ENCODE measurements at regions of chr17 and their contacts with region 1.

Region 1: GRCh38 chr17:41548844-41549595 is 20.9 kb upstream of the KRT19 start:
- DNase-seq: peak; percentile 83
- CTCF ChIP-seq: peak; percentile 97

Region 2: DNA sequence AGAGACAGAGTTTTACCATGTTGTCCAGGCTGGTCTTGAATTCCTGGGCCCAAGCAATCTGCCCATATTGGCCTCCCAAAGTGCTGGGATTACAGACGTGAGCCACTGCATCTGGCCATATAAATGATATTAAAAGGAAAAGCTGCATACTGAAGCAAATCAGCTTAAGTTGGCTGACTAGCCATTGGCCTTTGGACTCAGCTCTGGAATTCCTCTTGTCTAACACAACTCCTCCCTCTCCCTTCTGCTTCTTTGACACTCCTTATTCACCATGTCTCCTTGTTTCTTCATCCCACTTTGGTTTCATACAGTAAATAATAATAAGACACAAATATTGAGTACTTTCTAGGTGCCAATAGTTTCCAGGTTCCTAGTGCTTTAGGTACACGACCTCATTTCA is 689.5 kb before region 1 on chr17:
- CTCF ChIA-PET with region 1: interaction called, 29 read pairs
- POLR2A ChIA-PET with region 1: no interaction called
- DNase-seq: no peak
- CTCF ChIP-seq: no peak

Region 3: GRCh38 chr17:41530062-41531051 is 18.7 kb before region 1 on chr17:
- CTCF ChIA-PET with region 1: interaction called, 31 read pairs
- POLR2A ChIA-PET with region 1: no interaction called
- DNase-seq: no peak
- CTCF ChIP-seq: no peak

Region 4: GRCh38 chr17:41567317-41567716 is 18.3 kb after region 1 on chr17:
- CTCF ChIA-PET with region 1: interaction called, 47 read pairs
- POLR2A ChIA-PET with region 1: no interaction called
- DNase-seq: no peak
- CTCF ChIP-seq: no peak

Region 5: DNA sequence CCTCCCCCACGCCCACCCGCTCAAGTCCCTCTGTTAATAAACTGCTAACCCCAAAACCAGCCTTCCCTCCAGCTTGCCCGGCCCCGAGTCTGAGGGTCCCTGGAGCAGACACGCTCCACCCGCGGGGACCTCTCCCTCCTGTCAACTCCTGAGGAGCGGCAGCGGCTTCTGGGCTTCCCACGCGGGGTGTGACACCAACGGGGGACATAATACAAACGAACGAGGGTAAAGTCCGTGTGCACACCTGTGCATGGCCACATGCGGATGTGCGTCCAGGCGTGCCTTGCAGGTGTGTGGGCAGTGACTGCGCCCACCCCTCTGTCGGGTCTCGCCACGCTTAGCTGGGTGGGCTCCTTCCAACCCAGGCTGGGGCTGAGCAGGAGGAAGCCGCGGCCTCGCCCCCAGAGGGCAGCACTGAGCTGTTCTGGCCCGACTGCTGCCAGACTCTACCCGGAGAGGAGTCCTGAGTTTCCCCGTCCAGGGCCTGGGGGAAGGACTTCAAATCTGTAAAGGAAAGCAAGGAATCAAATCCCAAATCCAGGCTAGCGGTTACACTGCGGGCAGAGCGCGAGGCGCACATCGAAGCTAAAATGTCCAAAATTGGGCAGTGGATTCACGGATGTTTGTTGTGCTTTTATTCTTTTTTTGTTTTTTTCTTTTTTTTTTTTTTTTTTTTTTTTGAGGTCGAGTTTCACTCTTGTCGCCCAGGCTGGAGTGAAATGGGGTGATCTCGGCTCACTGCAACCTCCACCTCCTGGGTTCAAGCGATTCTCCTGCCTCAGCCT is 99.6 kb after region 1 on chr17:
- CTCF ChIA-PET with region 1: interaction called, 107 read pairs
- POLR2A ChIA-PET with region 1: no interaction called
- DNase-seq: peak; percentile 89
- CTCF ChIP-seq: peak; percentile 87

Measured in GM10248 (cell line).